Esophagus squamous epithelium (tissue), 5 donors: ENCODE measurements at regions of chr18 and their contacts with region 1.

Region 1: DNA sequence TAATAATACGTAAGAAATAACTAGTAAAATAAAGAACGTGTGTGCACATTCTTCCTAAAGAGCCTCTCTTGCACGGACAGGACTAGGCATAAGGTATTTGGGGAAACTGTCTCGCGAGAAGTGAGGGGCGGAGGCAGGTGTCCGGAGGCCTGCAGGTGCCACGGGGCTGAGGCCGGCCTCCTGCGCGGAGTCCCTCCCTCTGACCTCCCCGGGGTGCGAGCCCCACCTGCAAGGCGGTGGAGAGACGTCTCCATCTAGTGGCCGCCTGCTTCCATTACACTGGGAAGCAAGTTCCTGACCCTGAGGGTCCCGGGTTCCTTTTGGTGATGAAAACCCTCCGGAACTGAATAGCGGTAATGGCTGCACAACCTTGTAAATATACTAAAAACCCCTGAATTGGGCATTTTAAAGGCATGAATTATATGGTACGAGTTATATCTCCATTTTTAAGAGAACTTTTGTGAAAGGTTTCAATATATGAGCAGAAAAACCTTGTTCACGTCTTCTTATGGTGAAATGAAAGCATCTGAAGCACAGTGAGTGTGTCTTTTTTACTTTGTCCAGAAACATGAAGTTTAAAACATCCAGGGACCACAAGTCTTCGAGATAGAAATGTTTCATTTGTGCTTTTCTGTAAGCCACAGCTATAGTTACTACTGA is 35.5 kb upstream of the CTDP1 start:
- DNase-seq: no peak
- H3K4me3 ChIP-seq: no peak overlapping the region
- H3K27ac ChIP-seq: no peak overlapping the region
- H3K4me1 ChIP-seq: peaks cover 0 to 6% (median 0%) of the 10 kb centered on the region in 3 donors
- H3K27me3 ChIP-seq: peaks cover 0 to 41% (median 0%) of the 10 kb centered on the region in 4 donors
- CTCF ChIP-seq: peak; percentile 84 to 94 (median 92)
- POLR2A ChIP-seq: no peak

Region 2: GRCh38 chr18:79380816-79381806 is 263.0 kb before region 1 on chr18:
- intact Hi-C with region 1: loop called (anchors 2 kb)
- DNase-seq: no peak
- H3K4me3 ChIP-seq: no peak overlapping the region
- H3K27ac ChIP-seq: no peak overlapping the region
- H3K4me1 ChIP-seq: peaks cover 0 to 17% (median 5%) of the 10 kb centered on the region in 3 donors
- H3K27me3 ChIP-seq: peaks cover 0 to 33% (median 0%) of the 10 kb centered on the region in 4 donors
- CTCF ChIP-seq: peak; percentile 71 to 89 (median 83)
- POLR2A ChIP-seq: no peak

Region 3: GRCh38 chr18:79476918-79477571 is 167.1 kb before region 1 on chr18:
- intact Hi-C with region 1: no loop called
- DNase-seq: no peak
- H3K4me3 ChIP-seq: no peak overlapping the region
- H3K27ac ChIP-seq: no peak overlapping the region
- H3K4me1 ChIP-seq: no peaks in the 10 kb centered on the region
- H3K27me3 ChIP-seq: no peaks in the 10 kb centered on the region
- CTCF ChIP-seq: no peak
- POLR2A ChIP-seq: no peak